Mammary epithelial cell (primary cell): ENCODE measurements at regions of chr4 and their contacts with region 1.

Region 1: GRCh38 chr4:80072744-80073472 is at the start of gene ANTXR2:
- DNase-seq: peak; percentile 92
- H3K4me3 ChIP-seq: peak within 1 kb of the TSS; percentile 71 to 96 (median 81)
- H3K27ac ChIP-seq: peak within 1 kb of the TSS; percentile 56
- H3K4me1 ChIP-seq: peaks cover 43% of the 10 kb centered on the region
- H3K27me3 ChIP-seq: no peaks in the 10 kb centered on the region
- CTCF ChIP-seq: peak in 1 of 2 donors; percentile 16
- total RNA-seq, gene ANTXR2: 28.3 to 116 TPM

Region 2: GRCh38 chr4:79917246-79917645 is 155.7 kb before region 1 on chr4:
- CTCF ChIA-PET with region 1: no interaction called
- dilution Hi-C with region 1: no loop called
- in situ Hi-C with region 1: no loop called
- intact Hi-C with region 1: loop called (anchors 2 kb)
- DNase-seq: peak; percentile 32
- H3K4me3 ChIP-seq: no peak overlapping the region
- H3K27ac ChIP-seq: no peak overlapping the region
- H3K4me1 ChIP-seq: peaks cover 7% of the 10 kb centered on the region
- H3K27me3 ChIP-seq: no peaks in the 10 kb centered on the region
- CTCF ChIP-seq: peak; percentile 57 to 86

Region 3: DNA sequence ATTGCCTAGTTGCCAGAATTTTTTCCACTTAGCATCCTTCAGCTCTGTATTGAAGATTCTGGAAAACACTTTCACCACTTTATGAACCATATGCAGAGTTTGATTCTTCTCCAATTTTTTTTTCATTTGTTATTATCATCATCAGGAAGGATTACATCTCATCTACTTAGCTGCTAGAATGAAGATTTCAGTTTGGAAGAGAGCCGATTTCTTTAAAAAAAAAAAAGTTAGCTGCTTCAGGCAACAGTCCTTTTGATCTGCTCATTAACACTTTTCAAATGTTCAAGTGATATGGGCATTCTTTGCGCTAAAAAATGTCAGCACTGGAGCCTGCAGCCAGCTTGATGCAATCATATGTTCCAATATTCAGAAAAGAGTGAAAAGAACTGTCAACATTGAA is 76.1 kb before region 1 on chr4:
- CTCF ChIA-PET with region 1: no interaction called
- dilution Hi-C with region 1: no loop called
- in situ Hi-C with region 1: no loop called
- intact Hi-C with region 1: no loop called
- DNase-seq: no peak
- H3K4me3 ChIP-seq: no peak overlapping the region
- H3K27ac ChIP-seq: no peak overlapping the region
- H3K4me1 ChIP-seq: no peaks in the 10 kb centered on the region
- H3K27me3 ChIP-seq: no peaks in the 10 kb centered on the region
- CTCF ChIP-seq: no peak

Region 4: DNA sequence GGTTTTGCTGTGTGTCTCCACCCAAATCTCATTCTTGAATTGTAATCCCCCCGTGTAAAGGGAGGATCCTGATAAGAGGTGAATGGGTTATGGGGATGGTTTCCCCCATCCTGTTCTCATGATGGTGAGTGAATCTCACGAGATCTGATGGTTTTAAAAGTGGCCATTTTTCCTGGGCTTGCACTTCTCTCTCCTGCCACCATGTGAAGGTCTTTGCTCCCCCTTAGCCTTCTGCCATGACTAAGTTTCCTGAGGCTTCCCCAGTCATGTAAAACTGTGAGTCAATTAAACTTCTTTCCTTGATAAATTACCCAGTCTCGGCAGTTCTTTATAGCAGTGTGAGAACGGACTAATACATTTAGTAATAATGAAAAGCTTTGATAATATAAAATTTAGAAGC is 46.8 kb before region 1 on chr4:
- CTCF ChIA-PET with region 1: no interaction called
- dilution Hi-C with region 1: no loop called
- in situ Hi-C with region 1: no loop called
- intact Hi-C with region 1: loop called (anchors 5 kb)
- DNase-seq: no peak
- H3K4me3 ChIP-seq: no peak overlapping the region
- H3K27ac ChIP-seq: no peak overlapping the region
- H3K4me1 ChIP-seq: peaks cover 14% of the 10 kb centered on the region
- H3K27me3 ChIP-seq: no peaks in the 10 kb centered on the region
- CTCF ChIP-seq: no peak

Region 5: DNA sequence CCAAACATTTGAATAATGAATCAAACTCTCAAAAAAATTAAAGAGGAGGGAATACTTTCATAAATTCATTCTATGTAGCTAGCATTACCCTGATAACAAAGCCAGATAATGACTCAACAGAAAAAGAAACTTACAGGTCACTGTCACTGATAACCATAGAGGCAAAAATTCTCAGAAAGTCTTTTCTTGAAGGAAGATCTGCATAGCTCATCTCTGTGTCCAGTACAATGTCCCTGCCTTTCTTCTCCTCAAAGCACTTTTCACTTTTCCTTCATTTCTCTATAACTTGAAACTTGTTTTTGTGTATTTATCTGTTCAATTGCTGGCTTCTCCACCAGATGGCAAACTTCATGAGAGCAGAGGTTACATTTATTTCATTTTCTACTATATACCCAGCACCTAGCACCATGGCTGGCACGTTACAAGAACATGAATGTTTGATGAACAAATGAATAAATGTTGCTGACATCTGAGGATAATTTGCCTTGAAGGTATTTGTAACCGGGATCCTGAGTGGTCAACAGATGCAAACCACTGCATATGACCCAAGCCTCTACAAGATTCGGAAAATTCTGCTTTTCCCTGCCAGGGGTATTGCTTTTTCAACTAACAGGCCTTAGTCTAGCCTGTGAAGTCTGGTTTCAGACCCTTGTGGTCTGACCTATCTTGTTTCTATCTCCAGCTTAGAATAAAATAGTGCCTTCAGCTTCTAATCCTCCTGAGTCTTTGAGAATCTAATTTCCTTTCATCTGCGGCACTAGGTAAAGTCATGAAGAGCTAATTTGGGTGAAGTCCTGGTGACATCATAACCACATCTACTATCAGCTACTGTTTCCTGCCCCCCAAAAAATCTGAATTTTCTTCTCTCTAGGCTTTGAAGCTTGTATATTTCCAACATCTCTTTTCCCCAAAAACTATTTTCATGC is 52.6 kb after region 1 on chr4:
- CTCF ChIA-PET with region 1: no interaction called
- dilution Hi-C with region 1: no loop called
- in situ Hi-C with region 1: no loop called
- intact Hi-C with region 1: loop called (anchors 1 kb)
- DNase-seq: peak; percentile 31
- H3K4me3 ChIP-seq: peak overlapping the region; percentile 15 to 30 (median 22)
- H3K27ac ChIP-seq: peak overlapping the region; percentile 68
- H3K4me1 ChIP-seq: peaks cover 46% of the 10 kb centered on the region
- H3K27me3 ChIP-seq: no peaks in the 10 kb centered on the region
- CTCF ChIP-seq: peak; percentile 56 to 57

Region 6: GRCh38 chr4:80184053-80184790 is 111.3 kb after region 1 on chr4:
- CTCF ChIA-PET with region 1: no interaction called
- dilution Hi-C with region 1: no loop called
- in situ Hi-C with region 1: loop called in 1 of 2 experiments (anchors 5 kb)
- intact Hi-C with region 1: loop called (anchors 1 kb)
- DNase-seq: peak; percentile 76
- H3K4me3 ChIP-seq: peak overlapping the region; percentile 56 to 93 (median 67)
- H3K27ac ChIP-seq: peak overlapping the region; percentile 40
- H3K4me1 ChIP-seq: peaks cover 58% of the 10 kb centered on the region
- H3K27me3 ChIP-seq: no peaks in the 10 kb centered on the region
- CTCF ChIP-seq: peak; percentile 60 to 89

Region 7: DNA sequence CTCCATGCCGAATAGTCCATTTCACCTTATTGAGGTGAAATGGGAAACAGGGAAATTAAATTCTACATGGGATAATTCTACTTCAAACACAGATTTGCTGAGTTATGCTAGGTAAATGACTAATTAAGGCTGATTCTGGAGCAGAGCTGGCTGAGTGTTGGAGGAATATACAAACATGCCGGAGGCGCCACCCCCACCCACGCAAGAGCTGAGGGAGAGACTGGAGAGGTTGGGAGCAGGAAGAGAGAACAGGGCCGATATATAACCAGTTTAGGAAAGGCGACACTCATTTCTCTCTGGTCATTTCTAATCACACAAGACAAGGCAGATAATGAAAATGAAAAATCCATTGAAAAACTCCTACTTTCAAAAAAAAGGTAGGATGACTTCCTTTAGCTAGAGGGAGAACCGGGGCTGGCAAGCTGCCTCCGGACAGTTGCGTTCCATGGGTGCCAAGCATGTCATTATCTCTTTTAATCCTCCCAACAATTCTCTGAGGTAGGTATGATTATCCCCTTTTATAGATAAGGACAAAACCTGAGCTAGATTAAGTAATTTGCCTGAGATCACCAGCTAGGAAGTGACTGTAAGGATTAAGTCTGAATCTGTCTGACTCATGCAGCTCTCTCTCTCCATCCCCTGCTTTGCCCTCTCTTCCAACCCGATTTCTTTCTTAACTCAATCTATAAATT is 235.0 kb after region 1 on chr4:
- CTCF ChIA-PET with region 1: no interaction called
- dilution Hi-C with region 1: no loop called
- in situ Hi-C with region 1: no loop called
- intact Hi-C with region 1: loop called (anchors 10 kb)
- DNase-seq: peak; percentile 77
- H3K4me3 ChIP-seq: peak overlapping the region; percentile 11 to 22 (median 19)
- H3K27ac ChIP-seq: peak overlapping the region; percentile 80
- H3K4me1 ChIP-seq: peaks cover 56% of the 10 kb centered on the region
- H3K27me3 ChIP-seq: no peaks in the 10 kb centered on the region
- CTCF ChIP-seq: no peak